ENCODE measurements at regions of chr14 and their contacts with region 1.

Region 1: DNA sequence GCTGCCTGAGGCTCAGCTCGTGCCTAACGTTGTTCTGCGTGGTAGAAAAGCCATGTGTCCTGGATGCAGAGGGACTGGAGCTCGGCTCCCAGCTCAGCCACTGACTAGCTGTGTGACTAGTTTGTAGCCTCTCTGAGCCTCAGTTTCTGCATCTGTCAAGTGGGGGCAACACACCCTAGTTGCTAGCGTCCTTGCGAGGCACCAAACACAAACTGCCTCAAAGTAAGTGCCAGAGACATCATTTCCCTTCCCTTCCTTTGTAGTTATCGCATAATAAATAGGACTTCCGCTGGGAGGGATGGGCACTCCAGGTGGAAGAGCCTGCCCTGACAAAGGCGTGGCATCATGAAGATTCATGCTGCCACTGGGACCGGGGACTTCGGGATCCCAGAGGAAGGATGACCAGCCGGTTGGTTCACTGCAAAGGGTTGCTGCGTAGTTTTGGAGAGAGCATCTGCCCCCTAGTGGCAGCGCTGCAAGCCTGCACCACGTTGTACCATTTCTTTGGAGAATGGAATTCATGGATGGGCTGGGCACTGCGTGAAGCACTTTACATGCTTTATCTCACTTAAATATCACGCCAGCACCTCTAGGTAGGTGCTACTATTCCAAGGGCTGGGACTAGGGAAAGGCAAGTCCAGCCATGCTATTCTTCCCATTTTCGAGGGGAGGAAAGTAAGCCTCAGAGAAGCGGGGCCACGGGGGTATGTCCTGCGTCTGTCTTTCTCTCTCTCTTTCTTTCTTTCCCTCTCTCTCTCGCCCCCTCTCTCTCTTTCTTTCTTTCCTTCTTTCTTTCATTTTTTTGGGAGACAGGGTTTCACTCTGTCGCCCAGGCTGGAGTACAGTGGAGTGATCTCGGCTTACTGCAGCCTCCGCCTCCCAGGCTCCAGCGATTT is 4.6 kb downstream of the CCDC197 start:
- DNase-seq: peak; percentile 63
- H3K4me3 Mint-ChIP-seq: no peak overlapping the region
- H3K27ac Mint-ChIP-seq: no peak overlapping the region
- H3K4me1 Mint-ChIP-seq: peaks cover 42% of the 10 kb centered on the region
- H3K27me3 Mint-ChIP-seq: peaks cover 6% of the 10 kb centered on the region

Region 2: GRCh38 chr14:93977790-93978581 is 23.8 kb before region 1 on chr14:
- CTCF ChIA-PET with region 1: interaction called, 18 read pairs
- POLR2A ChIA-PET with region 1: no interaction called
- DNase-seq: peak; percentile 90
- H3K4me3 Mint-ChIP-seq: peak overlapping the region; percentile 42
- H3K27ac Mint-ChIP-seq: peak overlapping the region; percentile 95
- H3K4me1 Mint-ChIP-seq: peaks cover 76% of the 10 kb centered on the region
- H3K27me3 Mint-ChIP-seq: no peaks in the 10 kb centered on the region

Region 3: GRCh38 chr14:93991212-93991611 is 10.5 kb before region 1 on chr14:
- CTCF ChIA-PET with region 1: interaction called, 11 read pairs
- POLR2A ChIA-PET with region 1: no interaction called
- DNase-seq: no peak
- H3K4me3 Mint-ChIP-seq: no peak overlapping the region
- H3K27ac Mint-ChIP-seq: no peak overlapping the region
- H3K4me1 Mint-ChIP-seq: peaks cover 20% of the 10 kb centered on the region
- H3K27me3 Mint-ChIP-seq: peaks cover 2% of the 10 kb centered on the region

Measured in activated CD4-positive, alpha-beta T cell treated with anti-CD3 and anti-CD28 coated beads, Interleukin-2, amount 10 ng/mL, durations not matched to agents 7 days and 5 days (primary cell).